CD4-positive, alpha-beta memory T cell (primary cell): ENCODE measurements at regions of chr5 and their contacts with region 1.

Region 1: DNA sequence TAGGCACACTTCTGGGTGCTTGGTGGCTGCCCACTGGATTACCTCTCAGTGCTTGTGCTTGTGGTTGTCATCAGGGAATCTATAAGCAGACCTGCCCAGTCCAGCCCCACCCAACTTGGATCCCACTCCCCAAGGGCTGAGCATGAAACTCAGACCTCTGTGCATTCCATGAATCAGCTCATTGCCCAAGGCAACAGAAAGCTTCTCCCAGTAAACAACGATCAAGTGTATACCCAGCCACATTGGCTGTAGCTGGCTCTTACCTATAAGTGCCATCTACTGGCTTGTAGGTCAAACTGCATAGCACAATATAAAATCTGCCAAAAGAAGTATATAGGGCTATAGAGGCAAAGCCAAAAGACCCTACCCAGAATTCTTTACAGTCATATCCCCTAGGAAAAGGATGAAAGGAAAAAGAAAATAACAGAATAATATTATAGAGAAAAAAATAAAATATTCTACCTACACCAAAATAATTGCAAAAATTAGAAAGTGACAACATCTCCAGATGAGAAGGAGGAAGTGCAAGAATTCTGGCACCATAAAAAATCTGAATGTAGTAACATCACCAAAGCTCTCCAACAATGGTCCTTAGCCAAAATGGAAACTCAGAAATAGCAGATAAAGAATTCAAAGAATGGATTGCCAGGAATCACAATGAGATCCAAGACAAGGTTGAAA is 321.0 kb upstream of the TRPC7 start:
- DNase-seq: peak in 1 of 5 donors; percentile 4
- H3K4me3 ChIP-seq: no peak overlapping the region
- H3K4me3 Mint-ChIP-seq: no peak overlapping the region
- H3K27ac ChIP-seq: no peak overlapping the region
- H3K27ac Mint-ChIP-seq: no peak overlapping the region
- H3K4me1 ChIP-seq: no peaks in the 10 kb centered on the region
- H3K4me1 Mint-ChIP-seq: peaks cover 0 to 2% (median 0%) of the 10 kb centered on the region in 4 donors
- H3K27me3 ChIP-seq: no peaks in the 10 kb centered on the region
- H3K27me3 Mint-ChIP-seq: no peaks in the 10 kb centered on the region

Region 2: GRCh38 chr5:136374003-136374402 is 312.3 kb before region 1 on chr5:
- CTCF ChIA-PET with region 1: interaction called, 3 read pairs
- POLR2A ChIA-PET with region 1: no interaction called
- intact Hi-C with region 1: loop called (anchors 10 kb)
- DNase-seq: no peak
- H3K4me3 ChIP-seq: no peak overlapping the region
- H3K4me3 Mint-ChIP-seq: no peak overlapping the region
- H3K27ac ChIP-seq: no peak overlapping the region
- H3K27ac Mint-ChIP-seq: no peak overlapping the region
- H3K4me1 ChIP-seq: no peaks in the 10 kb centered on the region
- H3K4me1 Mint-ChIP-seq: no peaks in the 10 kb centered on the region
- H3K27me3 ChIP-seq: no peaks in the 10 kb centered on the region
- H3K27me3 Mint-ChIP-seq: peaks cover 0 to 2% of the 10 kb centered on the region in 2 donors

Region 3: DNA sequence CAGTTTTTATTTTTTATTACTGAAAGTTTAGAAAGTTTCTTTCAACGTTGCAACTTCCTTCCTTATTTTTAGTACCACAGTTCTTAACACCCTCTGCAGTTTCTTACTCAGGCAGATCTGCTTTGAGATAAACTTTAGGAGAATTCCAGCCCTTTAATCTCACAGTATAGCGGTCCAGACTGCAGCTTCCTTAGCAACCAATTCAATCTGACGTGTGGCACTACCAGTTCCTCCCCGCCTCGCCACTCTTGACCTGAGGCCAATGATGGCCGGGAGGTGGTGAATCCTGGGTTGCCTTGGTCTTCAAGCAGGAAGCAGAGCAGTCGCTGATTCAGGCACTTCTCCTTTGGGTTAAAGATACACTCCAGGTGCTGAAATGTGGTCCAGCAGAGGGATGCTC is 13.3 kb after region 1 on chr5:
- CTCF ChIA-PET with region 1: no interaction called
- POLR2A ChIA-PET with region 1: no interaction called
- intact Hi-C with region 1: no loop called
- DNase-seq: no peak
- H3K4me3 ChIP-seq: no peak overlapping the region
- H3K4me3 Mint-ChIP-seq: no peak overlapping the region
- H3K27ac ChIP-seq: no peak overlapping the region
- H3K27ac Mint-ChIP-seq: no peak overlapping the region
- H3K4me1 ChIP-seq: no peaks in the 10 kb centered on the region
- H3K4me1 Mint-ChIP-seq: no peaks in the 10 kb centered on the region
- H3K27me3 ChIP-seq: no peaks in the 10 kb centered on the region
- H3K27me3 Mint-ChIP-seq: peaks cover 2 to 3% of the 10 kb centered on the region in 2 donors

Region 4: DNA sequence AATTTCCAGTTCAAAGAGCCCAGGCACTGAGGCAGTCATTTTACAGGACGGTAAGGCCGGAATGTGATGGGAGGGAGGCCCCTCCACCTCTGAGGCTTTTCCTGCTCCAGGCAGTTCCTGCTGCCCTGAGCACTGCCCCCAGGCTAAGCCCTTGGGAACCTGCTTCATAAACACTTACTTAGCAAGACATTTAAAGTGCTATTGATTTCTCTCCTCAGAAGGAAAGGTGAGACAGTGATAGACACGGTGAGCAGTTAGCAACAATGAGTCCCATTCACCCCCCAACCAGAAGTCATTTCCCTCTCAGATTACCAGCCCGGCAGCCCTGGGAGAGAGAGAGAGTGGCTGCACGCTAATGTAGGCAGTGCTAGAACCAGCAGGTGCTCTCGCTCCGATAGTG is 350.3 kb after region 1 on chr5:
- CTCF ChIA-PET with region 1: no interaction called
- POLR2A ChIA-PET with region 1: no interaction called
- intact Hi-C with region 1: no loop called
- DNase-seq: no peak
- H3K4me3 ChIP-seq: no peak overlapping the region
- H3K4me3 Mint-ChIP-seq: no peak overlapping the region
- H3K27ac ChIP-seq: no peak overlapping the region
- H3K27ac Mint-ChIP-seq: no peak overlapping the region
- H3K4me1 ChIP-seq: no peaks in the 10 kb centered on the region
- H3K4me1 Mint-ChIP-seq: no peaks in the 10 kb centered on the region
- H3K27me3 ChIP-seq: no peaks in the 10 kb centered on the region
- H3K27me3 Mint-ChIP-seq: no peaks in the 10 kb centered on the region